Aorta (tissue), 5 donors: ENCODE measurements at regions of chr14 and their contacts with region 1.

Region 1: DNA sequence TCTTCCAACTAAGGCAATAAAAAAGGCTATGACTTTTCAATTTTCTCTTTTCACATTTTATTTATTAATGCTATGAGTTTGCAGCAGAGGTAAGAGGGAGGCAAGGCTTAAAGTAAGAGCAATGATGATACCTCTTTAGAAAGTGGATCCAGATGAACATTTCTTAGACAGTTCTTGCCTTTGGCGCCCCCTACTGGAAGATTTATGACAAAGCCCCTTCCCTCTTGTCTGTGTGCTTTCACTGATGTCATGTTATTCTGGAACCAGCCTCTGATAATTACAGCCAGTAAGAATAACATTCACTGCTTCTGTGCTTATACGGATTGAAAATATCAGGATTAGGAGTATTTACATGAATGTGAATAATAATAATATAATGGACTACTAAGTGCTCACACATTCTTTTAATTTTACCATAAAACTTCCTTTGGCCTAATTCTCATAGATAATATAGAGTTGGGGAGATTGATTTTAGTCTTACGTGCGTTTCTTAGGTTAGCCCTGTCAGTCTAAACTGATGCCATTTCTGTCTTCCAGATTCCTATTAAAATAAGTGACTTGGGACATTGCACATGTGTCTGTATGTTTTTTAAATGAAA is 1929.9 kb upstream of the SEL1L start:
- DNase-seq: no peak
- ATAC-seq: peak; percentile 57
- H3K4me3 ChIP-seq: no peak overlapping the region
- H3K27ac ChIP-seq: no peak overlapping the region
- H3K4me1 ChIP-seq: no peaks in the 10 kb centered on the region
- H3K27me3 ChIP-seq: no peaks in the 10 kb centered on the region

Region 2: DNA sequence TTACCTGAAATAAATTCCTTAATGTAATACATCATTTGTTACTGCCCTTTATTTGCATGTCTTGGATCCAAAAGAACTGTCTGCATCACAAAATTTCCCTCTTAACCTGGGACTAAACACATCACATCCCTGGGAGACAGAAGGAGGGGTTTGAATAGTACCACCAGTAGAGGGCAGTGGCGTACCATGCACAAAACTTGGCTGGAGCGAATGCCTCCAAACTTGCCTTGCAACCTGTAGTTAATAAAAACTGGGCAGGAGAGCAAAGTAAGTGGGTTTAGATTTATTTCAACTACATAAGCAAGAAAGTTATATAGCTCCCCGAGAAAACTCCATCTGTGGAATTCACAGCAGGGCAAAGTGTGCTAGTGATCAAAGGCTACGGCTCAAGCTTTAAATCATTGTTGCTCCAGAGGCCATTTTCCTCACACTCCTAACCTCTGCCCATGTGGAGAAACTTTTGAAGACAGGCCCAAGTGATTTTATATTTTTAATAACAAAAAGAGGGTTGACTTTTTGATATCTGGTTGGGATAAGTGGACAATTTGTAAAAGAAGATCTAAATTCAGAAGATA is 753.2 kb before region 1 on chr14:
- intact Hi-C with region 1: loop called in 1 of 2 experiments (anchors 10 kb)
- DNase-seq: peak; percentile 47 to 78
- ATAC-seq: no peak
- H3K4me3 ChIP-seq: no peak overlapping the region
- H3K27ac ChIP-seq: no peak overlapping the region
- H3K4me1 ChIP-seq: no peaks in the 10 kb centered on the region
- H3K27me3 ChIP-seq: no peaks in the 10 kb centered on the region

Region 3: DNA sequence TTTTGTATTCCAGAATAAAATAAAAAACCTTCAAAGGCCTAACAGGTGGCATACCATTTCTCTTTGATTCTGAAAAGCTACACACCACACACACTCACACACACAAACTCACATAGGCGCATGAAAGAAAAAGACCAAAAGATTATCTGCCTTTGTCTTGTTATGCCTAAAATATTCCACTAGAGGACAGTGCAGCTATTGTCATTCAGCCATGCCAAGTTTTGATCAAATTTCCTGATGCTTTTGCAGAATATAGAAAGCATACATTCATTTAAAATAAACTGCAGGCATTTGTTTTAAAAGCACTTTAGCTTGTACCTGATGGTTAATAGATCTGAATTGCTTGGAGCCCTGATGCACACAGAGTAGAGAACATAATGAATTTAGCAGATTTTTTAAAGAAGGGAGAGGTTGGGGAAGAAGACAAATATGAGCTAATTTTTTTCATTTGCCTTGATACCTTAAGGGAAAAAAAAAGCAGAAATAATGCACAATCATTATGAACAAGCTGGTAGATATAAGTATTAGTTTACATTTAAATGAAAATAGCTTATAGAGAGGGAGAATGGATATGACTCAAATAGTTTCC is 163.0 kb before region 1 on chr14:
- intact Hi-C with region 1: loop called (anchors 5 to 10 kb)
- DNase-seq: no peak
- ATAC-seq: no peak
- H3K4me3 ChIP-seq: no peak overlapping the region
- H3K27ac ChIP-seq: no peak overlapping the region
- H3K4me1 ChIP-seq: no peaks in the 10 kb centered on the region
- H3K27me3 ChIP-seq: no peaks in the 10 kb centered on the region

Region 4: GRCh38 chr14:83556746-83557460 is 93.3 kb after region 1 on chr14:
- intact Hi-C with region 1: no loop called
- DNase-seq: no peak
- ATAC-seq: no peak
- H3K4me3 ChIP-seq: no peak overlapping the region
- H3K27ac ChIP-seq: no peak overlapping the region
- H3K4me1 ChIP-seq: no peaks in the 10 kb centered on the region
- H3K27me3 ChIP-seq: no peaks in the 10 kb centered on the region